AG04450 (cell line): ENCODE measurements at regions of chr9 and their contacts with region 1.

Region 1: GRCh38 chr9:76216161-76216649 is 178.0 kb downstream of the RFK start:
- DNase-seq: peak; percentile 85
- H3K4me3 ChIP-seq: no peak overlapping the region
- H3K27ac ChIP-seq: peak overlapping the region; percentile 93
- H3K27me3 ChIP-seq: no peaks in the 10 kb centered on the region
- CTCF ChIP-seq: no peak

Region 2: DNA sequence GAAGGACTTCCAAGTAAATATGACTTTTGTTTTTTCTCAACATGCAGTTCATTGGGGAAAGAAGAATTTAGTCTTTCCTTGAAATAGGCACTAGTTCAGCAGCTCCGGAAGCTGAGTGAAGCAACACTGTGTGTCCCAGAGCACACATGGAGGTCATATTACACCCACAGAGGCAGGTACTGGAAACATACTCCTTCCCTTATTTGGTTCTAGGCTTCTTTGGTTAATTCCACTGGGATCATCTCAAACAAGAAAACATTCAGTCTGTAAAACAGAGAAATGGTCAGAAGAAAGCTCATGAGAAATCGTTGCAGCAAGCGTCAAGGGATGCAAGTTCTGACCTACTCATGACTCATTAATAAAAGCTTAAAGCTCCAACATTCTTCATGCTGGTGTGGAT is 500.8 kb before region 1 on chr9:
- CTCF ChIA-PET with region 1: no interaction called
- POLR2A ChIA-PET with region 1: no interaction called
- DNase-seq: no peak
- H3K4me3 ChIP-seq: no peak overlapping the region
- H3K27ac ChIP-seq: no peak overlapping the region
- H3K27me3 ChIP-seq: no peaks in the 10 kb centered on the region
- CTCF ChIP-seq: no peak

Region 3: DNA sequence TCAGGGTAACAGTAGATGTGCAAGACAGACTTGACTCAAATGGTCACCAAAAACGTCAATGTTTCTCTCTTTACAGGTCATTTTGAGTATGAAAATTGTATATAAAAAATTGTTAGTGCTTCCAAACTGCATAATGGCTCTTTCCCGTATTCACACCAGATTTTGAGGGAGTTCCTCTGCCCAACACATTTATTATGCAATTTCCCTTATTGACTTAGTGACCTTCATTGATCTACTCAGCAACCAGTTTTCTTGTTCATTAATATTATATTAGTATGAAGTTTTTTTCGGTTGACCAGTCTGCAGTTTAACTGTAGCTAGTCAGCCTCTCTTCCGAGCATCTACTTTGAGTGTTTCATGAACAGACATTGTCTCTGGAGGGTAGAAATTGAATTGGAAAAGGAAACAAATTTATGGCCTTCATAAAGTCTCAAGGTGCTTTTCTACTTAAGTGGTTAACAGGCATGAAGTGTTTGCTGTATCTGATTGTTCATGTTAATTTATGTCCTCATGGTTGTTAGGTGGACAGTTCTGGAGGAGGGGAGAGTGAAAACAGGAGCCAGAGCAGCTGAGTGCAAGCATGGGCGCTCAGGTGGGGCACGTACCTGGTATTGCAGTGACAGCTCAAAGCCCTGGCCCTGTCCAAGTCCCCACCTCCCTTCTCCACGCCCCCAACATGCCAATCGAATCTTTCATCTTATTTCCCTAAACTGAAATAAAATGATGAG is 62.1 kb before region 1 on chr9:
- CTCF ChIA-PET with region 1: no interaction called
- POLR2A ChIA-PET with region 1: no interaction called
- DNase-seq: no peak
- H3K4me3 ChIP-seq: no peak overlapping the region
- H3K27ac ChIP-seq: no peak overlapping the region
- H3K27me3 ChIP-seq: no peaks in the 10 kb centered on the region
- CTCF ChIP-seq: no peak

Region 4: DNA sequence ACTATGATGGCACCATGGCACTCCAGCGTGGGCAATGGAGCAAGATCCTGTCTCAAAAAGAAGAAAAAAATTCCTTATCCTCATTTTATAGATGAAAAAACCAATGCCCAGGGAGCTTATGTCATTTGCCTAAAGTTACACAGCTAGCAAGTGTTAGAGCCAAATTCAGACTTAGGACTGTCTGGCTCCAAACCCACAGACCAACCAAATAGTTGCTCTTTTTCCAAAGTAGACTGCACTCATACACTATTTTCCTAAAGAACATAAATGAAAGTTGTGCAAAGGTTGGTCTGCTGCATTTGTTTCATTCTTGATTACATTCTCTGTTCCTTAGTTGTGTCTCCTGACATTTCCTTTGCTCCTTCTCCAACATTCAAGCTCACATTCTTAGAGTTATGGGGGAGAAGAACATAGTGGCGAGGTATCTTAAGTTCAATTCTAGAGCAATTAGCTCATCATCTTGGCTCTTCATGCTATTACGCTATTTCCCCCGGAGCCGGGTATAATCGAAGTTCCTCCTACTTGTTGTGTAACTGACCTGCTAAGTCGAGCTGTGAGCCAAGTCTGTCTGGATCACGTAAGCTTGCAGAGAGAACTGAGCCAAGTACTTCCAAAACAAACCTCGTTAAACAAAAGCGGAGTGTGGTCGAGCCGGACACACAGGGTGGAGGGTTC is 39.7 kb after region 1 on chr9:
- CTCF ChIA-PET with region 1: no interaction called
- POLR2A ChIA-PET with region 1: interaction called, 13 read pairs
- DNase-seq: peak; percentile 91
- H3K4me3 ChIP-seq: peak overlapping the region; percentile 31
- H3K27ac ChIP-seq: peak overlapping the region; percentile 42
- H3K27me3 ChIP-seq: peaks cover 2% of the 10 kb centered on the region
- CTCF ChIP-seq: no peak